ENCODE measurements at regions of chr5 and their contacts with region 1.

Region 1: DNA sequence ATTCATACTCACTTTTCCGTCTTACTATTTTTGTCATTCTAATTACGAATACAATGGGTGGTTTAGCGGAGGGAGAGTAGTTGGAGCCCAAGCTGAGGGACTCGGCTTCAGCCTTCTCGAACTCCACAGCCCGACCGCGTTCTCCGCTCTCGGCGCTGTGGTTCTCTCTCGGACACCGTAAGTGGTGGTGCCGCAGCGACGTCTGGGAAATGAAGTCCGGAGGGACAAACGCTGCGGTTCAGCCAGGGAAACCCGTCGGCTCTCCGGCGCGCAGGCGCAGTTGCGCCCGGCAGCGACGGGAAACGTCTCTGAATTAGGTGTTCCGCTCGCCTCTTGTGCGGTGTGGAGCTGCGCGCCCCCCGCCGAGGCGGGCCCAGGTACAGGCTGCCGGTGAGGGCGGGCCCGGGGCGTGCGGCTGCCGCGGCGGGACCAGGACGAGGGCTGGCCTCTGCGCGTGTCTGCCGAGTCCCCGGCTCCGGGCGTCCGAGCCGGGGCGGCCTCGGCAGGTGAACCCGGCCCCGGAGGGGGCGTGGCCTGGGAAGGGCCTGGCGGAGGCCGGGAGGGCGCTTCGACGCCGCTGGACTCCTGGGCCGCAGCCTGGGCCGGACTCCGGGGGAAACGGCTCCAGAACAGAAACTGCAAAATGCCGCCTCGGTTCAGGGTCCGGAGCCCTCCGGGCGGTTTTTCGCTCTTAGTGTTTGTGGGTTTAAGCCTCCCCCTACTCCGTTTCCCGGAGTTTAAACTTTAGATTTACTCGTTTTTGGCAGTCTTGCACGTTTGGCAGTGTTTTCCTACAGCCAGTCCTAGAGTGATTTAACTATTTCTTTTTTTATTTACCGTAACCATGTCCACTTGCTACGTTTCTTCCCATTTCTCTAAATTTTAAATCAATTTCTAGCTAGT is at the start of gene ZNF879:
- DNase-seq: peak; percentile 96
- H3K4me3 Mint-ChIP-seq: peak within 1 kb of the TSS; percentile 96
- H3K27ac Mint-ChIP-seq: peak within 1 kb of the TSS; percentile 83
- H3K4me1 Mint-ChIP-seq: peaks cover 7% of the 10 kb centered on the region
- H3K27me3 Mint-ChIP-seq: peaks cover 1% of the 10 kb centered on the region
- total RNA-seq, gene ZNF879: 2.4 TPM

Region 2: DNA sequence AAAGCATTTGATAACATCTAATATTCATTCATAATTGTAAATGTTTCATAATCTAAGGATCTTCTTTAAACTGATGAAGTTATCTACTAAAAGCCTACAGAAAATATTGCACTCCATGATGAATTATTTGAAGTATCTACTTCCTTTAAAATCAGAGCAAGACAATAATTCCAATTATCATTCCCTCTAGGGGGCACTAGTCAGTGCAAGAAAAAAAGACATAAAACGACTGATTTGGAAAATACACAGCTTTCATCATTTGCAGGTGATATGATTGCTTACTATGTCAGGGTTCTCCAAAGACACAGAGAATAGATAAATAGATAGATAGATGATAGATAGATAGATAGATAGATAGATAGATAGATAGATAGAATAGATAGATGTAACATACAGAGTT is 15.1 kb before region 1 on chr5:
- CTCF ChIA-PET with region 1: no interaction called
- POLR2A ChIA-PET with region 1: no interaction called
- intact Hi-C with region 1: no loop called
- DNase-seq: no peak
- H3K4me3 Mint-ChIP-seq: no peak overlapping the region
- H3K27ac Mint-ChIP-seq: no peak overlapping the region
- H3K4me1 Mint-ChIP-seq: no peaks in the 10 kb centered on the region
- H3K27me3 Mint-ChIP-seq: peaks cover 13% of the 10 kb centered on the region

Region 3: DNA sequence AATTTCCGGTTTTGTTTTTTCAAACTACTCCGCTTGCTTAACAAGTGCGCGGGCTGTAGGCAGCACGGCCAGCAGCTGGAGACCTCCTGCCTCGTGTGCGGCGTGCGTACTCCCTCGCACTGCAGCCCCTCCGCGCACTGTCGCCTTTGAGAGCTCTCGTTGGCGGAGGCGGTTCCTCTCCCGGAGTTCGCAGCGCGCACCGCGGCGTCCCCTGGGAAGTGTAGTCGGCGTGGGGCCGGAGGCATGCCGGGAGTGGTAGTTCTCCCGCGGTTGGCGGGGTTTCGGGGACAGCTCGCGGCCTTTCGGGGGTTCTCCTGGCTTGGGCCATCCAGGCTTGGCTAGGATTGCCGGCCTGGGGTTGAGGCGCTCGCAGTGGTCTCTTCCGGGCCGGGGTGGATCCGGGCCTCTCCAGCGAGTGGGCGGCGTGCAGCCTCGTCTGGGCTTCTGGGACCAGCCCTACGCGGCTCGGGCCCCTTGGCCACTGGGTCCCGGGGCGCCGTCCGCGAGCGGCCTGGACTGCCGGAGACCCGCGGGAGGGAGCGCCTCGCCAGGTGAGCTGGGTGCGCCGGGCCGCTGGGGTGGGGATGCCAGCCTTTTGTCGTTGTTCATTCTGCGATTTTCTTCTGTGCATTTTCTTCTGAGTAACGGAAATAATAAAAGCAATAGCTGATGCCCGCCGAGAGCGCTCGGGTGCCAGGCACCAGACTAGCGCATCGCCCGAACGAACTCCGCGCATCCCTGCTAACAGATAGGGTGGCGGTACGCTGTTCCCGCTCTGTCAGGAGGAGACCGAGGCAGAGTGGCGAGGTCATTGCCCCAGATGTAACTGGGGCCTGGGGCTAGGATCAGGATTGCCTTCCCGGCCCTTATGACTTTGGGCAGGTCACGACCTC is 36.6 kb after region 1 on chr5 and contains the start of gene ZNF354C:
- CTCF ChIA-PET with region 1: no interaction called
- POLR2A ChIA-PET with region 1: no interaction called
- intact Hi-C with region 1: loop called (anchors 1 kb)
- DNase-seq: peak; percentile 91
- H3K4me3 Mint-ChIP-seq: peak within 1 kb of the TSS; percentile 82
- H3K27ac Mint-ChIP-seq: peak within 1 kb of the TSS; percentile 88
- H3K4me1 Mint-ChIP-seq: peaks cover 30% of the 10 kb centered on the region
- H3K27me3 Mint-ChIP-seq: peaks cover 6% of the 10 kb centered on the region
- total RNA-seq, gene ZNF354C: 5.9 to 6.0 TPM